ENCODE measurements at regions of chr7 and their contacts with region 1.

Region 1: GRCh38 chr7:23597094-23598091 is at the start of gene CCDC126:
- DNase-seq: peak; percentile 83
- H3K4me3 Mint-ChIP-seq: peak within 1 kb of the TSS; percentile 83
- H3K27ac Mint-ChIP-seq: peak within 1 kb of the TSS; percentile 20
- H3K4me1 Mint-ChIP-seq: peaks cover 63% of the 10 kb centered on the region
- H3K27me3 Mint-ChIP-seq: no peaks in the 10 kb centered on the region
- total RNA-seq, gene CCDC126: 5.3 to 5.7 TPM

Region 2: DNA sequence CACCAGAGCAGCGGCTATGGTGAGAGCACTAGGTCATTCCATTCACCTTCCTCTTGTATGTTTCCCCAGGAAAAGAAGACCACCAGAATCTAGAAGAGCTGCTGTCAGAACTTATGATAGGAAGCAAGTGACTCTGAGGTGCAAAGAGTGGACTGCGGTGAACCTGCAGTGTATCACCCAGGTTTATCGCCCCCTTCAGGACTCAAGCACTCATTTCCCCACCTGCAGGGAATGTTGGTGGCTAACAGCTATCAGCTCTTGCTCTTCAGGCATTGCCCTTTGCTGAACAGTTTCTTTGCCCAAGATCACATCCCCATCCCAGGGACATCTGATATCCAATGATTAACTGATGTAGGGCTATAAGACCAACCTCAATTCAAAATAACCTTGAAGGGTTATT is 936.7 kb before region 1 on chr7:
- CTCF ChIA-PET with region 1: no interaction called
- intact Hi-C with region 1: loop called (anchors 1 kb)
- DNase-seq: peak; percentile 28
- H3K4me3 Mint-ChIP-seq: no peak overlapping the region
- H3K27ac Mint-ChIP-seq: no peak overlapping the region
- H3K4me1 Mint-ChIP-seq: peaks cover 36% of the 10 kb centered on the region
- H3K27me3 Mint-ChIP-seq: no peaks in the 10 kb centered on the region

Region 3: GRCh38 chr7:23114896-23115295 is 482.5 kb before region 1 on chr7:
- CTCF ChIA-PET with region 1: no interaction called
- intact Hi-C with region 1: no loop called
- DNase-seq: no peak
- H3K4me3 Mint-ChIP-seq: no peak overlapping the region
- H3K27ac Mint-ChIP-seq: no peak overlapping the region
- H3K4me1 Mint-ChIP-seq: peaks cover 7% of the 10 kb centered on the region
- H3K27me3 Mint-ChIP-seq: no peaks in the 10 kb centered on the region

Region 4: DNA sequence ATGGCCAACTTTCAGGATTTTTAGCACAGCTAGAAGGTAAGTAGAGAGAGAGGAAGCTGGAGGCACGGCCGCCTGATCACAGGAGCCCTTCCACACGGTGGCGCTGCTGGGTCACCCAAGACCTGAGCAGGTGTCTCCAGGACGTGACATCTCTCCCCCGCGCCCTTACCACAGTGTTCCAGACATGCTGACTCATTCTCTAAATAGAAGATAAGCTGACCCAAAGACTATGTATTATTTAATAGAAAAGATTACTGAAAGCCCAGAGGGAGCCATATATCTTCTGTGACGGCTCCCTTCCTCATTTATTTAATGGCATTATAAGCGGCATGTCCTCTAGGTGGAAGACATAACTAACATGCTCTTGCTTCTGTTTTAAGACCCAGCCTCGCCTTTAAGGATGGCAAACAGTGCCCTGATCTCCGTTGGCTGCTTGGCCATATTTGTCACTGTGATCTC is 324.2 kb before region 1 on chr7:
- CTCF ChIA-PET with region 1: interaction called, 3 read pairs
- intact Hi-C with region 1: loop called (anchors 2 kb)
- DNase-seq: peak; percentile 97
- H3K4me3 Mint-ChIP-seq: peak overlapping the region; percentile 67
- H3K27ac Mint-ChIP-seq: no peak overlapping the region
- H3K4me1 Mint-ChIP-seq: peaks cover 7% of the 10 kb centered on the region
- H3K27me3 Mint-ChIP-seq: peaks cover 2% of the 10 kb centered on the region

Region 5: DNA sequence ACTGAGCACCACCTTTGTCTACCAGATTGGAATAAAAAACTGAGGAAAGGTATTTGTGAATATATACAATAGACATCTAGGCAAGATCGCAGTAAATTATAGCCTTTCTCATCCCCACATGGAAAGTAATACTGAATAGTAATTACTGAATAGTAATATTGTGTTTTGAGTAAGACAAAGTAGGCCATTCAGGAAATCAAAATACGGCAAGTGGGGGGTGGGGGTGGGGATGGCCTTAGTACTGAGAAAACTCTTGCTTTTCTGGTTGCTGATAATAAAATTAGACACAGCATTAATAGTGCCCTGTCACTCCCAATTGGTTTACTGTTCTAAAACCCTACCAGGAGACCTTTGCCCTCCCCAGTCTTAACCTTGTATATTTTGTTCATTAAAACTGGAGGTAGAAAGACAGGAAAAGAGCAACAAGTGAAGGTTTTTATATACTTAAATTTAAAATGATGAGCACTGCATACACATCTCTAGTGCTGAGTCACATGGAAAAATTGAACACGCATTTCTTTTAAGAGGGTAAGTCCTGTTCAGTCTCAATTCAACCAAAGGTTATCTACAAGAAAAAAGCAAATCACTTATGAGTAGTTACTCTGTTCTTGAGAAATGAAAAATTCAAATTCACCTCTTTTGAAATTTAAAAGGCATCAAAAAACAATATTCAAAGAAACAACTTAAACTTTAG is 192.7 kb before region 1 on chr7:
- CTCF ChIA-PET with region 1: no interaction called
- intact Hi-C with region 1: loop called (anchors 1 kb)
- DNase-seq: peak; percentile 25
- H3K4me3 Mint-ChIP-seq: no peak overlapping the region
- H3K27ac Mint-ChIP-seq: peak overlapping the region; percentile 81
- H3K4me1 Mint-ChIP-seq: peaks cover 28% of the 10 kb centered on the region
- H3K27me3 Mint-ChIP-seq: no peaks in the 10 kb centered on the region

Region 6: GRCh38 chr7:24572997-24573625 is 975.7 kb after region 1 on chr7 and contains the start of gene PALS2:
- CTCF ChIA-PET with region 1: no interaction called
- intact Hi-C with region 1: loop called (anchors 1 kb)
- DNase-seq: peak; percentile 76
- H3K4me3 Mint-ChIP-seq: peak within 1 kb of the TSS; percentile 84
- H3K27ac Mint-ChIP-seq: peak within 1 kb of the TSS; percentile 72
- H3K4me1 Mint-ChIP-seq: peaks cover 32% of the 10 kb centered on the region
- H3K27me3 Mint-ChIP-seq: peaks cover 3% of the 10 kb centered on the region
- total RNA-seq, gene PALS2: 21.8 to 22.5 TPM

Region 7: DNA sequence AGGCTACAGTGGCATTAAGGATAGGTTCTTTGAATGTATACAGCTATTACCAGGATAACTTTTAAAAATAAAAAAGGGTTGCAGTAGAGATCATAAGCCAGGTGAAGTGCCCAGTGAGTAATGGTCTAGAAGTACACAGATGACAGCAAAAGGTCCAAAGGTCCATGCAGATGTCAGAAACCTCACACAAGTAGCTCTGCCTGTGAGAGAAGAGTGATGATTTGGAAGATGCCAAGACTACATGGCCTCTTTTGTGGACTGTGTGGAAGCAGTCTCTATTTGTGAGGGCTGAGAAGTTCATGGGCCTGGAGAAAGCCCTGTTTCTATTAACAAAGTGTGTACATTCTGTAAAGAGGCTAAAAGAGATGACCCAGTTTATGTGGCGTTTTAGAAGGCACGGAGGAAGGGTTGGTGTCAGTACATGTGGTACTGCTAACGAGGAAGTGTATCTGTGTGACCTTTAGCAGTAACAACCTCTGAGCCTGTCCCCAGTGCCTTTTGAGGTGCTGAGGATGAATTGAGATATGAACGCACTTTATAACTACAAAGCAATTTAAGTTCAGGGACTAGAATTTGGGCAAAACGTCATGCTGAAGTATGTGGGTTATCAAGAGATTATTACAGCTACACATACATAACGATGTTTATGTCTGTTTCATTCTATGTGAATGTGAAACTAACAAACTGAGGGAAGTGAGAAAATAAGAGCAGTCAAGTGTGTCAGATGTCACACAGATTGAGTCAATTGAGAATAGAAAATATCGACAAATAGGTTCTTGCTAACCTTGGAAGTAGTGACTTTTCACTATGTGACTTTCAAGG is 1520.0 kb after region 1 on chr7:
- CTCF ChIA-PET with region 1: no interaction called
- intact Hi-C with region 1: loop called (anchors 2 kb)
- DNase-seq: no peak
- H3K4me3 Mint-ChIP-seq: no peak overlapping the region
- H3K27ac Mint-ChIP-seq: peak overlapping the region; percentile 5
- H3K4me1 Mint-ChIP-seq: peaks cover 50% of the 10 kb centered on the region
- H3K27me3 Mint-ChIP-seq: no peaks in the 10 kb centered on the region